SK-N-SH (cell line): ENCODE measurements at regions of chr3 and their contacts with region 1.

Region 1: DNA sequence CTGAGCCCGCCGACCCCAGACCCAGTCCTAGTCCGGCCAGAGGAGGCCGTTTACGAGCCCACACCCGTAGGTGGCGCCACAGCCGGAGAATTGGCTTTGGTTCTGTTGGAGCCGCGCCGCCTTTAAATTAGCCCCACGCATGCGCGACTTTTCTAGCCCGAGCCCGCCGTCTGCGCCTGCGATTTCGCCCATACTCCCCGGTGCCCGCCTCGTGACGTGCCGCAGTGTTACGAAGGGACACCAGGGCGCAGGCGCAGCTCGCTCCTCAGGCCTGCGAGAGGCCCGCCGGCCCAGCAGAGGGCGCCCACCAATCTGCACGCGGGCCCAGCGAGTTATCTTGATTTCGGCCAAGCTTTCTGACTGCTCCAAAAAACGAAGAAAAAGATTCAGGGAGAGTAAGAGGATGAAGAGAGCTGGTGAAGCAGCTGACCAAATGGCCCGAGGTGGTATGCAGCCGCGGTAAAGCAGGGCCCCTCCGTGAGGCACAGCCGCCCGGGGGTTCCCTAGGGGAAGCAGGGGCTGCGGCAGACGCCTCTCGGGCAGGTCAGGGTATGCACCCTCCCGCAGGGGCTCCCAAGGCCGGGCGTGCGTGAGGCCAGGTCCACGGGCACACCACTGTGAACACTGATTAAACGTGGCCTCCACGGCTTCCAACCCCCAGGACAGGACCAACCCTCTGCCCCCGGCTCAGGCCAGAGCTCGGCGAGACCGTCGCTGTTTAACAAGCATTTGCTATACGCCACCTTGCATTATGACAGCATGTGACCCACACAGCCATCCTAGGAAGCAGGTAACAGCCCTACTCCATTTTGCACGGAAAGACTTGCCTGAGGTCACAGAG is 32.8 kb downstream of the RPN1 start:
- DNase-seq: peak; percentile 100
- H3K4me3 ChIP-seq: peak overlapping the region; percentile 78 to 88
- H3K27ac ChIP-seq: peak overlapping the region; percentile 79 to 89; a peak in 3 of 4 replicates
- H3K4me1 ChIP-seq: peaks cover 15% of the 10 kb centered on the region in 2 experiments
- H3K27me3 ChIP-seq: no peaks in the 10 kb centered on the region
- CTCF ChIP-seq: peak; percentile 92
- EP300 ChIP-seq: no peak
- RAD21 ChIP-seq: peak; percentile 76

Region 2: GRCh38 chr3:128598884-128599664 is 18.7 kb before region 1 on chr3:
- CTCF ChIA-PET with region 1: interaction called, 16 read pairs
- POLR2A ChIA-PET with region 1: no interaction called
- DNase-seq: no peak
- H3K4me3 ChIP-seq: no peak overlapping the region
- H3K27ac ChIP-seq: no peak overlapping the region
- H3K4me1 ChIP-seq: peaks cover 0 to 9% of the 10 kb centered on the region in 2 experiments; a peak in 1 of 4 replicates
- H3K27me3 ChIP-seq: no peaks in the 10 kb centered on the region
- CTCF ChIP-seq: no peak
- EP300 ChIP-seq: no peak
- RAD21 ChIP-seq: no peak

Region 3: GRCh38 chr3:128632301-128632700 is 14.5 kb after region 1 on chr3:
- CTCF ChIA-PET with region 1: interaction called, 29 read pairs
- POLR2A ChIA-PET with region 1: no interaction called
- DNase-seq: no peak
- H3K4me3 ChIP-seq: no peak overlapping the region
- H3K27ac ChIP-seq: no peak overlapping the region
- H3K4me1 ChIP-seq: no peaks in the 10 kb centered on the region
- H3K27me3 ChIP-seq: no peaks in the 10 kb centered on the region
- CTCF ChIP-seq: no peak
- EP300 ChIP-seq: no peak
- RAD21 ChIP-seq: no peak

Region 4: GRCh38 chr3:128753715-128754114 is 135.9 kb after region 1 on chr3:
- CTCF ChIA-PET with region 1: no interaction called
- POLR2A ChIA-PET with region 1: no interaction called
- DNase-seq: no peak
- H3K4me3 ChIP-seq: no peak overlapping the region
- H3K27ac ChIP-seq: no peak overlapping the region
- H3K4me1 ChIP-seq: no peaks in the 10 kb centered on the region
- H3K27me3 ChIP-seq: no peaks in the 10 kb centered on the region
- CTCF ChIP-seq: no peak
- EP300 ChIP-seq: no peak
- RAD21 ChIP-seq: no peak

Region 5: DNA sequence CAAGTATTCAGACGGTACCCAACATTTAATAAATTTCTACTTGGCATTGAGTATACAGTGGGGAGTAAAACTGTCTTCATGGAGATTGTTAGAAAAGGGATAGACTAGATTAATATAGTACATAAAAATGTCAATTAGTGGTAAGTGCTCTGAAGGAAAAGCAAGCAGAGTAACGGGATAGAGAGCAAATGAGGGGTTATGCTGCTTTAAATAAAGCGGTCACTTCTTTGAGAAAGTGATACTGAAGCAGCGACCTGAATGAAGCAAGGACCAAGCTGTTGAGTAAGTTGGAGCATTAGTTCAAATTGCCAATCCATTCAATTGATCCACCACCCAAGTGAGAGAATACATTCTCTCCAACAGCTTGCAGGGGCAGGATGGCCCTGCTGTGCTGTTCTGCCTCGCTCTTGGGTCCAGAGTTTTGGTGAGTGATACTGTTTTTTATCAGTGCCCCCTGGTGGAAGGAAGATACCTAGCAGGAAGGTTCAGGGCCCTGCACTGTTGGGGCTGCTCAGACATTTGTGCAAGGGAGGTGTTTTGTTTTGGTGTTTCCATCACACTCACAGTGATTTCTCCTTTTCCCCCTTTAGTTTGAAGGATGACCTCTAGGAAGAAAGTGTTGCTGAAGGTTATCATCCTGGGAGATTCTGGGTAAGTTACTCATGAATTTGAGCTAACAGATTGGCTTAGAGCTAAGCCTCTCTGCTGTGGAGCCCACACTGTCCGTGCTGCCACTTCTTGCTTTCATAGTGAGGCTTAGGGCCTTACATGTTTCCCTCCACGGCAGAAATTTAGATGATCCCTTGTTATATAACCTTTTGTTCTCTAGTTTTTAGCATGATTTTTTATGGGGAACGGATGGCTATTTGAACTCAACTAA is 177.2 kb after region 1 on chr3:
- CTCF ChIA-PET with region 1: interaction called, 29 read pairs
- POLR2A ChIA-PET with region 1: interaction called, 3 read pairs
- DNase-seq: peak; percentile 81
- H3K4me3 ChIP-seq: no peak overlapping the region; a peak in 1 of 4 replicates
- H3K27ac ChIP-seq: peak overlapping the region; percentile 20 to 69; a peak in 3 of 4 replicates
- H3K4me1 ChIP-seq: peaks cover 5 to 13% of the 10 kb centered on the region in 2 experiments; a peak in 2 of 4 replicates
- H3K27me3 ChIP-seq: no peaks in the 10 kb centered on the region
- CTCF ChIP-seq: peak; percentile 82
- EP300 ChIP-seq: no peak
- RAD21 ChIP-seq: peak; percentile 78

Region 6: DNA sequence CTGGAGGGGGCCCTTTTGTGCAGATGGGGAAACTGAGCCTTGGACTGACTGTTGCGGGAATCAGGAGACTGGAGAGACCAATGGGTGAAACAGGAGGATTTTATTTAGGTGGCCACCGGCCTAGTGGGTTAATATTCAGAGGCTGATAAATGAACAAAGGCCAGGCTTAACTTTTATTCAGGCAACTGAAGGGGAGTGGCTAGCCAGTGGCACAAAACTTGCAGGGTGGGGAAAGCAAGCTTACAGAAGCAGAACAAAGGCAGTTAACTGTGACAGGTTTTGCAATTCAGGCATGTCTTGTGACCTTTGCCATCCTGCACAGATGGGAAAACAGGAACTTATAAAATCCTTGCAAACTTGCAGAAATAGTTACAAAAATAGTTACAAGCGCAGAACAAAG is 236.7 kb after region 1 on chr3:
- CTCF ChIA-PET with region 1: interaction called, 12 read pairs
- POLR2A ChIA-PET with region 1: no interaction called
- DNase-seq: no peak
- H3K4me3 ChIP-seq: no peak overlapping the region
- H3K27ac ChIP-seq: no peak overlapping the region
- H3K4me1 ChIP-seq: peaks cover 0 to 12% of the 10 kb centered on the region in 2 experiments; a peak in 1 of 4 replicates
- H3K27me3 ChIP-seq: no peaks in the 10 kb centered on the region
- CTCF ChIP-seq: no peak
- EP300 ChIP-seq: no peak
- RAD21 ChIP-seq: no peak